T-cell (primary cell): ENCODE measurements at regions of chr16 and their contacts with region 1.

Region 1: GRCh38 chr16:6335076-6335475 is 997.6 kb upstream of the RBFOX1 start:
- DNase-seq: no peak
- ATAC-seq: no peak
- H3K4me3 ChIP-seq: no peak overlapping the region
- H3K4me3 Mint-ChIP-seq: no peak overlapping the region
- H3K27ac ChIP-seq: no peak overlapping the region
- H3K27ac Mint-ChIP-seq: no peak overlapping the region
- H3K4me1 ChIP-seq: no peaks in the 10 kb centered on the region
- H3K4me1 Mint-ChIP-seq: no peaks in the 10 kb centered on the region
- H3K27me3 ChIP-seq: no peaks in the 10 kb centered on the region
- H3K27me3 Mint-ChIP-seq: no peaks in the 10 kb centered on the region

Region 2: DNA sequence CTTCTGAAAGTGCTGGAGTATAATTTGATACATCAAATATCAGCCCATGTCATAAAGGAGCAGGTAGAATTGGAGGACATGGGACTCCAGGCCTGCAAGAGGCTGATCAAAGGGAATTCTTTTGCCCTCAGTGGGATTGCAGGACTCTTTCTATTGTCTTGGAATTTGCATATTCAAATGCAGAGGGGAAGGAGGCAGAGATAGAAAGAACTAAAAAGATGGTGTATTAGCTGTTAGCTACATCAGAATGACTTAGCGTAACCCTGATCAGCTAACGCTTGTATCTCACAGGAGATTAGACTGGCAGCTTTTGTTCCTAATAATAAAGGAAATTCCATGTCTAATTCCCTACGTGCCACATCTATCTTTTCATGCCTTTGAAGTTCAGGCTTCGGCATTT is 17.1 kb before region 1 on chr16:
- CTCF ChIA-PET with region 1: no interaction called
- POLR2A ChIA-PET with region 1: no interaction called
- DNase-seq: no peak
- ATAC-seq: no peak
- H3K4me3 ChIP-seq: no peak overlapping the region
- H3K4me3 Mint-ChIP-seq: no peak overlapping the region
- H3K27ac ChIP-seq: no peak overlapping the region
- H3K27ac Mint-ChIP-seq: no peak overlapping the region
- H3K4me1 ChIP-seq: no peaks in the 10 kb centered on the region
- H3K4me1 Mint-ChIP-seq: no peaks in the 10 kb centered on the region
- H3K27me3 ChIP-seq: no peaks in the 10 kb centered on the region
- H3K27me3 Mint-ChIP-seq: no peaks in the 10 kb centered on the region

Region 3: DNA sequence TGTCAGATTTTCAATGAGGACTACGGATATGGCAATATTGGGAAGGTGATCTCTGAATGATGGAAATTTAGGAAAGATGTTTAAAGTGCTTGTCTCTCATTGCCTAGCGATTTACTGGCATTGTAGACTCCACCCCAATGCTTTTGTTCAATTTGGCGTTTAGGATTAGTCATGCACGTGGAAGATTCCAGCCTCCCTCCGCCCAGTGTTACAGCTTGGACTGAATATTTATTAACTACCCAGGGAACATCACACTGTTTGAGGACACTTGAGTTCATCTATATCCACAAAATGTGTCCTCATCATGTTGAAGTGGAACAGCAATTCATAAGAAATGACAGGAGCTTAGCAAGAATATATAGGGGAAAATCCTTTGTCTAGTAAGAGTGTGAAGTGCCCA is 258.7 kb after region 1 on chr16:
- CTCF ChIA-PET with region 1: interaction called in 1 of 2 experiments, 13 read pairs
- POLR2A ChIA-PET with region 1: no interaction called
- DNase-seq: no peak
- ATAC-seq: no peak
- H3K4me3 ChIP-seq: no peak overlapping the region
- H3K4me3 Mint-ChIP-seq: no peak overlapping the region
- H3K27ac ChIP-seq: no peak overlapping the region
- H3K27ac Mint-ChIP-seq: no peak overlapping the region
- H3K4me1 ChIP-seq: no peaks in the 10 kb centered on the region
- H3K4me1 Mint-ChIP-seq: no peaks in the 10 kb centered on the region
- H3K27me3 ChIP-seq: no peaks in the 10 kb centered on the region
- H3K27me3 Mint-ChIP-seq: no peaks in the 10 kb centered on the region